ENCODE measurements at regions of chr1 and their contacts with region 1.

Region 1: GRCh38 chr1:113140588-113141446 is 67.8 kb downstream of the LRIG2 start:
- DNase-seq: peak; percentile 43 to 74
- ATAC-seq: peak; percentile 91

Region 2: GRCh38 chr1:113389953-113390834 is 249.4 kb after region 1 on chr1 and contains the start of gene MAGI3:
- intact Hi-C with region 1: loop called in 1 of 2 experiments (anchors 10 kb)
- DNase-seq: peak; percentile 97
- ATAC-seq: peak; percentile 79
- total RNA-seq, gene MAGI3: 58.2 to 78.6 TPM

Region 3: GRCh38 chr1:113677250-113678158 is 536.7 kb after region 1 on chr1:
- intact Hi-C with region 1: loop called in 1 of 2 experiments (anchors 5 kb)
- DNase-seq: no peak
- ATAC-seq: peak; percentile 53

Measured in left colon (tissue), 2 donors.